Activated naive CD4-positive, alpha-beta T cell treated with anti-CD3 and anti-CD28 coated beads for 36 hours (primary cell): ENCODE measurements at regions of chr1 and their contacts with region 1.

Region 1: GRCh38 chr1:201361652-201362504 is 15.6 kb downstream of the TNNT2 start:
- DNase-seq: peak; percentile 58
- H3K4me3 Mint-ChIP-seq: no peak overlapping the region
- H3K27ac Mint-ChIP-seq: no peak overlapping the region
- H3K4me1 Mint-ChIP-seq: no peaks in the 10 kb centered on the region
- H3K27me3 Mint-ChIP-seq: no peaks in the 10 kb centered on the region

Region 2: DNA sequence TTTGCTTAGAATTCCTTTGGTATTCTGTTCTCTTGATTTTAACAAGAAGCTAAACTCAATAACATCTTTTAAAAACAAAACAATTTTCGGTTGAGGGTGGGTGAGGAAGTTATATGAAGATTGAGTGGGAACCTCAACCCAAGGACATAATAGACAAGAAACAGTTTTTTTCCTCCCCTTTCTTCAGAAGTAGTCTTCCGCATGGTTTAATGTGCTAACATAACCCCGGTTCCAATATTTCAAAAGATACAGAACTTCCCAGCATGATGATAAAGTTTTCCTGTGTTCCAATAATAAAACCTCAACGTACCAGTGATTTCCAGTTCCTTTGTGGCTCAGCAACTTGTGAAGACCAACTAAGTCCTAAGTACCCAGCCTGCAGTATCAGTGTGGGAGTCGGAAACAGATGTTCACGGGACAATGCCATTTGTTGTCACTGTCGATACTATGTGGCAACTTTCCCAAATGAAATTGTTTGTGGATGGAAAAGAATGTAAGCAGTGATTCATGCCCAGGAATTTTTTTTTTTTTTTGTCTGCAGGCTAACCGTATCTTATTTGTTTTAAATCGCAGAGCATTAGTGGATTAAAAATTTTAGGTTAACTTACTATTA is 1285.8 kb before region 1 on chr1:
- CTCF ChIA-PET with region 1: no interaction called
- intact Hi-C with region 1: no loop called
- DNase-seq: no peak
- H3K4me3 Mint-ChIP-seq: no peak overlapping the region
- H3K27ac Mint-ChIP-seq: no peak overlapping the region
- H3K4me1 Mint-ChIP-seq: no peaks in the 10 kb centered on the region
- H3K27me3 Mint-ChIP-seq: peaks cover 15% of the 10 kb centered on the region

Region 3: DNA sequence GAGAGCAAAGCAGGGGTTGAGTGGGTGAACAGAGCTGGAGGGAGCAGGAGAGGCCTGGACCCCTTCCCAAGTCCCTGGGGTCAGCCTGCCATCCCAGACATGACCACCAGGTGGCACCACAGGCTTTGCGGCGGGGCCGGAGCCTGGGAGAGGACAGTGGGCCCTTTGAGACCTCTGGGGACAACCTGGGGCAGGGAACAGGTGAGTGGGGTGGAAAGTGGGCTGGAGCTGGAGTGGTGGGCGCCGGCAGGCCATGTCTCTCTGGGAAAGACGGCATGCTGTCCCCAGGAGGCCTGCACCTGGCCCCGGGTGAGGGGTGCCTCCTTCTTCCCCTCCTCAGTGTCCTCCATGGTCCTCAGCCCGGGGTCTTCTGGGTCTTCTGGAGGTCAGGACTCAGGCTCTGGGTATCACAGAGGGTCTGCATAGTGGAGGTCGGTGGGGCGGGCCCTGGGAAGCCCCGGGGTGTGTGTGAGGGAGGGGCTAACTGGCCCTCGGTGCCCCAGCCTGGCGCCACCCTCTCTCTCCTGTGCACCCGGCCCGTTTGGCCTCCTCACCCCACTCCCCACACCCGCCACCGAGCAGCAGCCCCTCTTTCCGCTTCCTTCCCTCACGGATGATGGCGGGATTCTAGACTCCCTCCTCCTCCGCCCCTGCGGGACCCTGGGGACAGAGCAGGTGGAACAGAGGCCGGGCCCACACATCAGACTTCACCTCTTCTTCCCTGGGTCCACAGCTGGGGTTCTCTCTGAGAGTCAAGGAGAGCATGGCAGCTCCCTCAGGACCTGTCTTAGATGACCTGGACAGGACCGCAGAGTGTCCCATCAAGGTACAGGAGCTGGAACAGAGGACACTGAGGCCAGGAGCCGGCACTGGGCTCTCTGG is 107.0 kb before region 1 on chr1:
- CTCF ChIA-PET with region 1: interaction called, 34 read pairs
- intact Hi-C with region 1: loop called (anchors 1 kb)
- DNase-seq: peak; percentile 75
- H3K4me3 Mint-ChIP-seq: no peak overlapping the region
- H3K27ac Mint-ChIP-seq: no peak overlapping the region
- H3K4me1 Mint-ChIP-seq: no peaks in the 10 kb centered on the region
- H3K27me3 Mint-ChIP-seq: no peaks in the 10 kb centered on the region

Region 4: DNA sequence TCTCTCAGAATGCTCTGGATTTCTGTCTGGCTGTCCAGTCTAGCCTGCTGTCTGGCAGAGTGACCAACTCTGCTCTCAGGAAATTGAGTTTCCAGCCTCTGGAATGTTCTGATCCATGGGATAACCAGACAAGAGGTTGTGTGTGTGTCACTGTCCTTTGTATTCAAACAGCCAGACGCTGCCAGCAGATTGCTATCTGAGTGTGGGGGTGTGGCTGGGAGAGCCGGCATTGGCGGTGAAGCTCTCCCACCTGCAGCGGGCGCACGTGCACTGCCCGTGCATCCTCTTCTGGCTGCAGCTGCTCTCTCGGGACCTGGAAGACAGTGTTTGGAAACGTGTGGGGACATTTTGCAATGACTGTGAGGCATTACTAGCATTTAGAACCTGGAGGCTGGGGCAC is 52.5 kb before region 1 on chr1:
- CTCF ChIA-PET with region 1: no interaction called
- intact Hi-C with region 1: loop called (anchors 1 kb)
- DNase-seq: peak; percentile 42
- H3K4me3 Mint-ChIP-seq: no peak overlapping the region
- H3K27ac Mint-ChIP-seq: no peak overlapping the region
- H3K4me1 Mint-ChIP-seq: peaks cover 7% of the 10 kb centered on the region
- H3K27me3 Mint-ChIP-seq: peaks cover 5% of the 10 kb centered on the region

Region 5: DNA sequence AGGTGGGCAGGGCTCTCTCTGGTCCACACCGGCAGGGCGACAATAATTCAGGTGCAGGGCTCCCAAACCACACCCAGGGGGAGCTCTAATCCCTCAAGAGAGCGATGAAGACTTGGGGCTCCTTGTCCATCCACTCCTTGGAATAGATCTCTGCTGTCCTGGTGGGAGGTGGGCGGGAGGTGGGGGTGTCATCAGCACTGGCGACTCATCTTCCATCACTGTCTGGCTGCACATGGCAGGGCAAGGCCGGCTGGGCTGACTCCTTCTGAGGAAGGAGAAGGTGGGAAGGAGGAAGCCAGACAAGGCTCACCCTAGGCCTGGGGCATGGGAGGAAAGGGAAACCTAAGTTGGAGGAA is 13.7 kb before region 1 on chr1:
- CTCF ChIA-PET with region 1: interaction called, 19 read pairs
- intact Hi-C with region 1: no loop called
- DNase-seq: peak; percentile 52
- H3K4me3 Mint-ChIP-seq: no peak overlapping the region
- H3K27ac Mint-ChIP-seq: no peak overlapping the region
- H3K4me1 Mint-ChIP-seq: no peaks in the 10 kb centered on the region
- H3K27me3 Mint-ChIP-seq: peaks cover 25% of the 10 kb centered on the region